ENCODE measurements at regions of chr10 and their contacts with region 1.

Region 1: GRCh38 chr10:118720685-118721538 is 33.9 kb downstream of the CACUL1 start:
- DNase-seq: no peak
- ATAC-seq: peak; percentile 75
- H3K4me3 ChIP-seq: no peak overlapping the region
- H3K27ac ChIP-seq: no peak overlapping the region
- H3K4me1 ChIP-seq: no peaks in the 10 kb centered on the region
- H3K27me3 ChIP-seq: no peaks in the 10 kb centered on the region
- CTCF ChIP-seq: peak; percentile 64 to 76 (median 66)
- EP300 ChIP-seq: no peak
- POLR2A ChIP-seq: no peak
- RAD21 ChIP-seq: peak; percentile 67

Region 2: GRCh38 chr10:118183180-118183579 is 537.7 kb before region 1 on chr10:
- CTCF ChIA-PET with region 1: no interaction called
- POLR2A ChIA-PET with region 1: no interaction called
- RAD21 ChIA-PET with region 1: no interaction called
- SMC1A ChIA-PET with region 1: no interaction called
- in situ Hi-C with region 1: no loop called
- intact Hi-C with region 1: no loop called
- DNase-seq: no peak
- ATAC-seq: no peak
- H3K4me3 ChIP-seq: no peak overlapping the region
- H3K27ac ChIP-seq: no peak overlapping the region
- H3K4me1 ChIP-seq: no peaks in the 10 kb centered on the region
- H3K27me3 ChIP-seq: no peaks in the 10 kb centered on the region
- CTCF ChIP-seq: no peak
- EP300 ChIP-seq: no peak
- POLR2A ChIP-seq: no peak
- RAD21 ChIP-seq: no peak

Region 3: DNA sequence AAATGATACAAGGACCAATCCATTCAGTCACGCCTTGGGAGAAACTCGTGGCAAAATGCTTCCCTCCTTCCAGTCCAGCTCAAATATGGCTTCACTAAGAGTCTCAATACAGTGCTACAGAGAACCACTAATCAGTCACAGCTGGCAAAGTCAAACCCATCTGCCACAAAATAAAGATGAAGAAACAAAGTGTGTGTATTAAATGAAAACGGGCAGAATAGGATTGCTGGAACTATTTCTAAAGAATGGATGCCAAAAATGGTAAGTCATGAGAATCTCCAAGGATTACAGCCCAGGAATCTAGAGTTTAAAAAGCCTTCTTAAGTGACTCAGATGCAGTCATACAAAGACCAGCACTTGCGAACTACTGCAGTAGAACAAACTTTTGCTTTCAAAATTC is 28.0 kb before region 1 on chr10:
- CTCF ChIA-PET with region 1: interaction called, 12 read pairs
- POLR2A ChIA-PET with region 1: no interaction called
- RAD21 ChIA-PET with region 1: no interaction called
- SMC1A ChIA-PET with region 1: interaction called, 4 read pairs
- in situ Hi-C with region 1: no loop called
- intact Hi-C with region 1: no loop called
- DNase-seq: no peak
- ATAC-seq: no peak
- H3K4me3 ChIP-seq: no peak overlapping the region
- H3K27ac ChIP-seq: no peak overlapping the region
- H3K4me1 ChIP-seq: no peaks in the 10 kb centered on the region
- H3K27me3 ChIP-seq: no peaks in the 10 kb centered on the region
- CTCF ChIP-seq: no peak
- EP300 ChIP-seq: no peak
- POLR2A ChIP-seq: no peak
- RAD21 ChIP-seq: no peak

Region 4: DNA sequence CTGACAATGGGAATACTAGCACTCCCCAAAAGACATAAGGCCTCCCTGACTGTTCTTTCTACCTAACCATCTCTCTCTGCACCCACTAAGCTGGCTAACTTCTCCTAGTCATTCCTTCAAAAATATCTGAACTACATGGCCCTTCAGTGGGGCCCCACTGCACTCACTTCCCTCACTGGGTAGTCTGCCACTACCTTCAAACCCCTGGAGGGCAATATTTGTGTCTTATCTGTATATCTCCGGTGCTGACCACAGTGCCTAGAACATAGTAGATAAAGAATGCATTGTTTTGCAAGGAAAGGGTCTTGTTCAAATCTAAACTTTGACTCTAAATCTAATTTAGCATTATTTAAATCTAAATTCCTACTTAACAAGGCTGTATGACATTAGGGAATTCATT is 10.4 kb before region 1 on chr10:
- CTCF ChIA-PET with region 1: interaction called, 12 read pairs
- POLR2A ChIA-PET with region 1: no interaction called
- RAD21 ChIA-PET with region 1: interaction called, 3 read pairs
- SMC1A ChIA-PET with region 1: interaction called, 11 read pairs
- in situ Hi-C with region 1: no loop called
- intact Hi-C with region 1: no loop called
- DNase-seq: no peak
- ATAC-seq: no peak
- H3K4me3 ChIP-seq: no peak overlapping the region
- H3K27ac ChIP-seq: no peak overlapping the region
- H3K4me1 ChIP-seq: no peaks in the 10 kb centered on the region
- H3K27me3 ChIP-seq: no peaks in the 10 kb centered on the region
- CTCF ChIP-seq: no peak
- EP300 ChIP-seq: no peak
- POLR2A ChIP-seq: no peak
- RAD21 ChIP-seq: no peak

Region 5: DNA sequence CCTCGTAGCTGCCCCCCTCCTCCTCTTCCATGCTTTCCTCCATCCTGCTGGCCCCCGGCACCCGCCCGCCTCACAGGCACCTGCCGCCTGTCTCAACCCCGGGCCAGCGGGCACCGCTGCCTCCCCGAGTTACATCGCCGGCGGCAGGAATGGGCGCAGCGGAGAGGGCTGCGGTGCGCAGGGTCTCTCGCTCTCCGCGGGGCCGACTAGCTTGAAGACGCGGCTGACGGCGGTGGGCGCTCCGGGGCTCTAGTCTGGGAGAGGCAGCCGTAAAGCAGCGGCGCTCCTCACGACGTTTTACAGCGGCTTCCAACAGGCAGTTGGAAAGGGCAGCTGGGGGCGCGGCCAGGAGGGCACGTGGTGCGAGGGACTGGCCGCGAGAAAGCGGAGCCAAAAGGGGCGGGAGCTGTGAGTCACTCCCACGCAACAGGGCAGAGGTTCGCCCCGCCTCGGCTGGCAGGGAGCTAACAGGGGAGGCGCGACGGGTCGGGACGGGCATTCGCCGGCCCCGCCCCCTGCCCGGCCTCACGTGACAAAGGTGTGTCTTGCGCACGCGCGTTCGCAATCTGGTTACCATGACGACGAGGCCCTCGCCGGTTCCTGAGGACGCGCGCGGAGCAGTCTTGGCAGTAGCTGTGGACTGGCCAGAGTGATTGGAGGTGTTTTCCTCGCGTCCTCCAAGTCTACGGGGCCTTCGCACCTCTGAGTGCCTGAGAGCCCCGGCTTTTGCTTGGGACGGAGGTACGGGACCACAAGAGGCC is 34.0 kb after region 1 on chr10 and contains the start of gene CACUL1:
- CTCF ChIA-PET with region 1: interaction called, 27 read pairs
- POLR2A ChIA-PET with region 1: no interaction called
- RAD21 ChIA-PET with region 1: interaction called, 3 read pairs
- SMC1A ChIA-PET with region 1: interaction called, 4 read pairs
- in situ Hi-C with region 1: no loop called
- intact Hi-C with region 1: no loop called
- DNase-seq: peak; percentile 98
- ATAC-seq: peak; percentile 96
- H3K4me3 ChIP-seq: peak within 1 kb of the TSS; percentile 98
- H3K27ac ChIP-seq: peak within 1 kb of the TSS; percentile 69
- H3K4me1 ChIP-seq: peaks cover 8% of the 10 kb centered on the region
- H3K27me3 ChIP-seq: no peaks in the 10 kb centered on the region
- CTCF ChIP-seq: no peak
- EP300 ChIP-seq: no peak; a peak in 1 of 4 replicates
- POLR2A ChIP-seq: peak; percentile 90
- RAD21 ChIP-seq: no peak
- polyA plus RNA-seq, gene CACUL1: 7.4 to 10.6 TPM

Region 6: GRCh38 chr10:118832241-118832651 is 111.3 kb after region 1 on chr10:
- CTCF ChIA-PET with region 1: no interaction called
- POLR2A ChIA-PET with region 1: no interaction called
- RAD21 ChIA-PET with region 1: no interaction called
- SMC1A ChIA-PET with region 1: no interaction called
- in situ Hi-C with region 1: no loop called
- intact Hi-C with region 1: no loop called
- DNase-seq: no peak
- ATAC-seq: no peak
- H3K4me3 ChIP-seq: no peak overlapping the region
- H3K27ac ChIP-seq: no peak overlapping the region
- H3K4me1 ChIP-seq: no peaks in the 10 kb centered on the region
- H3K27me3 ChIP-seq: no peaks in the 10 kb centered on the region; a peak in 3 of 4 replicates
- CTCF ChIP-seq: no peak
- EP300 ChIP-seq: no peak
- POLR2A ChIP-seq: no peak
- RAD21 ChIP-seq: no peak

Measured in GM12878 (cell line).